ENCODE measurements at regions of chr13 and their contacts with region 1.

Region 1: GRCh38 chr13:42594970-42595571 is 21.1 kb downstream of the TNFSF11 start:
- DNase-seq: peak; percentile 55
- H3K4me3 ChIP-seq: no peak overlapping the region
- H3K27ac ChIP-seq: no peak overlapping the region
- H3K4me1 ChIP-seq: no peaks in the 10 kb centered on the region
- H3K27me3 ChIP-seq: no peaks in the 10 kb centered on the region
- CTCF ChIP-seq: peak; percentile 78

Region 2: GRCh38 chr13:42153199-42154113 is 441.6 kb before region 1 on chr13:
- intact Hi-C with region 1: no loop called
- DNase-seq: no peak
- H3K4me3 ChIP-seq: no peak overlapping the region
- H3K27ac ChIP-seq: no peak overlapping the region
- H3K4me1 ChIP-seq: no peaks in the 10 kb centered on the region
- H3K27me3 ChIP-seq: no peaks in the 10 kb centered on the region
- CTCF ChIP-seq: no peak

Region 3: DNA sequence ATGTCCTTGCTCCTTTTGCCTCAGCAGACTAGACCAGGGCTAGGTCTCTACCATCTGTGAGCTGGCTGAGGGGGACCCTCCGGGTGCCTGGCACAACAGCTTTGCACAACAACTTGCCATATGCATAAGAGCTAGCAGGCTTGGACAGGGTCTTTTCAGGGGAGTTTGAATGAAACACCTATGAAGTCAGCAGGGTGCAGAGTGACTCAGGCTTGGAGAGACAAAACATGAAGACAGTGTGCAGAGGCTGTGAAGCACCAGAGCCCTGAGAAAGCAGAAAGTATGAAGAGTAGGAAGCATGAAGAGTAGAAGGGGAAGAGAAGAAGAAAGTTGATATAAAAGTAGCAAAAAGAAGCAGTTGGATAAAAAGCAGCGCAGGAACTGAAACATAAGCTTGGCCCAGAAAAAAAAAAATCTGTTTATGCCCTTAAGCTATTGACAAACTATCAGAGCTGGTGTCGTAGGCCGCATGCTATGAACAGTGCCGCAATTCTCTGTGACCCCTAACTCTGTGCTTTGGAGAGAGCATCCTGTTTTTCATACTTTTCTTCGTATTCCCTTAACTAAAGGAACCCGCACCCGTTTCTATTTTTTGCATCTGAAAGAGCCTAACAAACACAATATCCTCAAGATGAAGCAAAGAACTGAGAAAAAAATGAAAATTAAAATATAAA is 133.6 kb after region 1 on chr13:
- intact Hi-C with region 1: no loop called
- DNase-seq: no peak
- H3K4me3 ChIP-seq: no peak overlapping the region
- H3K27ac ChIP-seq: no peak overlapping the region
- H3K4me1 ChIP-seq: no peaks in the 10 kb centered on the region
- H3K27me3 ChIP-seq: no peaks in the 10 kb centered on the region
- CTCF ChIP-seq: no peak

Region 4: GRCh38 chr13:43132257-43132656 is 537.2 kb after region 1 on chr13:
- intact Hi-C with region 1: loop called (anchors 10 kb)
- DNase-seq: peak; percentile 25
- H3K4me3 ChIP-seq: no peak overlapping the region
- H3K27ac ChIP-seq: no peak overlapping the region
- H3K4me1 ChIP-seq: no peaks in the 10 kb centered on the region
- H3K27me3 ChIP-seq: no peaks in the 10 kb centered on the region
- CTCF ChIP-seq: no peak

Region 5: GRCh38 chr13:43387880-43388731 is 793.0 kb after region 1 on chr13:
- intact Hi-C with region 1: no loop called
- DNase-seq: no peak
- H3K4me3 ChIP-seq: no peak overlapping the region
- H3K27ac ChIP-seq: no peak overlapping the region
- H3K4me1 ChIP-seq: no peaks in the 10 kb centered on the region
- H3K27me3 ChIP-seq: no peaks in the 10 kb centered on the region
- CTCF ChIP-seq: no peak

Region 6: GRCh38 chr13:43804461-43805070 is 1209.5 kb after region 1 on chr13:
- intact Hi-C with region 1: loop called (anchors 5 kb)
- DNase-seq: peak; percentile 24
- H3K4me3 ChIP-seq: no peak overlapping the region
- H3K27ac ChIP-seq: no peak overlapping the region
- H3K4me1 ChIP-seq: no peaks in the 10 kb centered on the region
- H3K27me3 ChIP-seq: no peaks in the 10 kb centered on the region
- CTCF ChIP-seq: peak; percentile 50

Region 7: GRCh38 chr13:43878892-43879754 is 1284.1 kb after region 1 on chr13 and contains the start of gene CCDC122:
- intact Hi-C with region 1: loop called (anchors 10 kb)
- DNase-seq: peak; percentile 78
- H3K4me3 ChIP-seq: peak within 1 kb of the TSS; percentile 64
- H3K27ac ChIP-seq: peak within 1 kb of the TSS; percentile 93
- H3K4me1 ChIP-seq: no peaks in the 10 kb centered on the region
- H3K27me3 ChIP-seq: no peaks in the 10 kb centered on the region
- CTCF ChIP-seq: no peak
- total RNA-seq, gene CCDC122: 5.4 to 6.9 TPM